Tibial artery (tissue), 4 donors: ENCODE measurements at regions of chr1 and their contacts with region 1.

Region 1: GRCh38 chr1:228486596-228487335 is 416 bp upstream of the RNF187 start:
- DNase-seq: peak; percentile 56 to 87
- H3K4me3 ChIP-seq: peak overlapping the region; percentile 71 to 80
- H3K27ac ChIP-seq: peak overlapping the region; percentile 90 to 98
- H3K4me1 ChIP-seq: peaks cover 0 to 43% (median 32%) of the 10 kb centered on the region in 4 donors
- H3K27me3 ChIP-seq: no peaks in the 10 kb centered on the region
- CTCF ChIP-seq: peak in 1 of 2 experiments; percentile 15

Region 2: GRCh38 chr1:228378090-228378872 is 108.5 kb before region 1 on chr1:
- intact Hi-C with region 1: loop called (anchors 10 kb)
- DNase-seq: peak; percentile 67 to 87
- H3K4me3 ChIP-seq: peak overlapping the region; percentile 54 to 63
- H3K27ac ChIP-seq: peak overlapping the region; percentile 64 to 65
- H3K4me1 ChIP-seq: peaks cover 0 to 39% (median 29%) of the 10 kb centered on the region in 4 donors
- H3K27me3 ChIP-seq: peaks cover 0 to 3% of the 10 kb centered on the region in 2 donors
- CTCF ChIP-seq: peak; percentile 58 to 66

Region 3: DNA sequence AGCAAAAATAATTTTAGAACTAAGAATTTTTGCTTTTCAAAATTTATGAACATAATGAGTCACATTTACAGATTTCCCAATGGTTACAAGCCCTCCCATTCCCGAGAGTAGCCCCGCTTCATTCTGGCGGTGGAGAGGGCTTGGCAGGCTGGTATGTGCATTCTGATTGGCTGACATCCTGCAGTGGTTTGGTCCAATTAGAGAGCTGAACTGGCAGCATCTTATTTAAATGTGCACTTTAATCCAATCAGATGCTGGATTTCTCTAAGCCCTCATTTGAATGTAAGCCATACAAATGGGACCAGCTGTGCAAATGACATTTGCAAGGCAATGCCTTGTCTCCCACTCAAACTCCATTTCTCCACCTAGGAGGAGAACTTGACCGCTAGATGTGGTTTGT is 52.1 kb before region 1 on chr1:
- intact Hi-C with region 1: no loop called
- DNase-seq: no peak
- H3K4me3 ChIP-seq: no peak overlapping the region
- H3K27ac ChIP-seq: no peak overlapping the region
- H3K4me1 ChIP-seq: no peaks in the 10 kb centered on the region
- H3K27me3 ChIP-seq: peaks cover 0 to 34% of the 10 kb centered on the region in 2 donors
- CTCF ChIP-seq: no peak